ENCODE measurements at regions of chr6 and their contacts with region 1.

Region 1: GRCh38 chr6:70221025-70221714 is 81.7 kb downstream of the COL9A1 start:
- DNase-seq: peak; percentile 46 to 70 (median 60)
- ATAC-seq: peak; percentile 81
- H3K4me3 ChIP-seq: no peak overlapping the region
- H3K27ac ChIP-seq: no peak overlapping the region
- H3K4me1 ChIP-seq: no peaks in the 10 kb centered on the region; a peak in 1 of 5 replicates
- H3K27me3 ChIP-seq: peaks cover 6 to 10% of the 10 kb centered on the region in 2 experiments; a peak in 3 of 5 replicates
- CTCF ChIP-seq: peak; percentile 54 to 83 (median 66); a peak in 5 of 6 replicates
- EP300 ChIP-seq: no peak
- POLR2A ChIP-seq: no peak
- RAD21 ChIP-seq: peak; percentile 76 to 79

Region 2: DNA sequence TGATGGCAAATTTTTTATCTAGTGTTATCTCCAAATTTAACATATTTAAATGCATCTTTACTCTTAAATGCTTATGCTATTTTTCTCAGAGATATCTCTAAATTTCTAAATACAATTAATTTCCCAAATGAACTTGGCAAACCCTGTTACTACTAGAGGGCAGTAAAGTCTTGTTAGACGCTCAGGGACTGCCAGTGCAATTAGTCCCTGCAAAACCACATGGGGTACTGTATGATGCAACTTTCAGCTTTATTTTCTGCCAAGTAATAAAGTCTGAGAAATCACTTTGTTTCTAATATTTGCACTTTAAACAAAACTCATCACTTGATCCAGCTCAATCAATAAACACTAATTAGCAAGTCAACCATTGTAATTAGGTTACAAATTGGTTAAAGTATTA is 1662.1 kb before region 1 on chr6:
- CTCF ChIA-PET with region 1: no interaction called
- POLR2A ChIA-PET with region 1: no interaction called
- in situ Hi-C with region 1: no loop called
- intact Hi-C with region 1: no loop called
- DNase-seq: peak in 2 of 4 experiments; percentile 9 to 24
- ATAC-seq: peak; percentile 91
- H3K4me3 ChIP-seq: no peak overlapping the region
- H3K27ac ChIP-seq: no peak overlapping the region
- H3K4me1 ChIP-seq: no peaks in the 10 kb centered on the region
- H3K27me3 ChIP-seq: no peaks in the 10 kb centered on the region
- CTCF ChIP-seq: peak in 2 of 3 experiments; percentile 36 to 45; a peak in 3 of 6 replicates
- EP300 ChIP-seq: no peak
- POLR2A ChIP-seq: no peak
- RAD21 ChIP-seq: peak; percentile 32 to 49; a peak in 3 of 4 replicates

Region 3: DNA sequence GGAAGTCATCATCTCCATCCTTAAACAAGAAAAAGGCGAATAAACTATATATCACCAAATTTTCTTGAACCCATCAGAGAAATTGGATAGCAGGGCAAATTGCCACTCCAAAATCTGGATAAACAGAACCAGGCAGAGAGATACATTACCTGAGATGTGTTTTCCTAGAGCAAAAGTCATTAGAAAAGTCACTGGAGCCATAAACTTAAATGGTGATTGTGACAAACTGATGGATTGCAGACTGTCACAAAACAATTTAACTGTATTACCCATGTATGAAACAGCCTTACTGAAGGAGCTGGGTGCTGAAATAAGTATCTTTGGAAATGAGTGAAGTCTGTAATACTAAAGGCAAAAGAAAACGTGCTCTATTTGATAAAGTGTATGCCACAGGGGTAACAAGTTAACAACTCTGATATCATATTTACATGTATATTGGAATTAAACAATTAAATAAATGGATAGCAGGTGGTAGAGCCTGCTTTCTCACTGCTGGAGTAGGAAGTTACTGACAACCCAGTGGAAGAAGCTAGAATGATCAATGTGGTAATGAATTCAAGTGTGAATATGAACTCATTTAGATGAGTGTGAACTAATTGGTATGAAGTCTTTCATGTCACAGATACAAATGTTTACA is 611.2 kb before region 1 on chr6:
- CTCF ChIA-PET with region 1: no interaction called
- POLR2A ChIA-PET with region 1: no interaction called
- in situ Hi-C with region 1: no loop called
- intact Hi-C with region 1: no loop called
- DNase-seq: no peak
- ATAC-seq: peak; percentile 56
- H3K4me3 ChIP-seq: no peak overlapping the region
- H3K27ac ChIP-seq: no peak overlapping the region
- H3K4me1 ChIP-seq: no peaks in the 10 kb centered on the region
- H3K27me3 ChIP-seq: no peaks in the 10 kb centered on the region
- CTCF ChIP-seq: no peak
- EP300 ChIP-seq: no peak
- POLR2A ChIP-seq: peak; percentile 63; the same call in 1 of the 2 replicates
- RAD21 ChIP-seq: no peak

Region 4: DNA sequence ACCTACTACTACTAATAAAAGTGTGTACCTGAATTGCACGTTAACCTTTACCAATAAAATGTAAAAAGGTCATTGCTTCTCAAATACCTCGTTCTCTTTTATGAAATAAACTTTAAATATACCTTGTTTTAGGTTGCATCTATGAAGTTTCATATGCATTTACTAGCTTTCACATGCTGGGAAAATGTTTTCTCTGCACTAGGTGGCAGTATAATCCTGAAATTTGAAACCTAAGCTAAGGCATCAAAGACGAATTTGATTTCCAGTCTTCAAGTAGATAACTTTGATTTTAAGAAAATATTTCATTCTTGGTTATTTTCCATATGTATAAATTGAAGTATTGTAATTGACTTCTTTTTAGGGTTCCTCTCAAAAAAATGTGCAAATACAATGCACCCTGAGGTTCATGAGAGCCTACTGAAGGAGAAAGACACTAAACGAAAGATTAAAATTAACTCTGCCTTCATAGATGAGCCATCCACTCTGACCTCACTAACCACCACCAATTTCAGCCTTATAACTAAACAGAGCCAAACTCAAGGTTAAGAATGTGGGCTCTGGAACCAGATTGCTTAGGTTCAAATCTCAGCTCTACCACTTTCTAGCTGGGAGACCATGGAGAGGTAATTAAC is 89.0 kb after region 1 on chr6:
- CTCF ChIA-PET with region 1: no interaction called
- POLR2A ChIA-PET with region 1: interaction called, 3 read pairs
- in situ Hi-C with region 1: no loop called
- intact Hi-C with region 1: loop called (anchors 2 kb)
- DNase-seq: peak in 3 of 4 experiments; percentile 14 to 66 (median 20)
- ATAC-seq: peak; percentile 73
- H3K4me3 ChIP-seq: no peak overlapping the region
- H3K27ac ChIP-seq: no peak overlapping the region
- H3K4me1 ChIP-seq: no peaks in the 10 kb centered on the region; a peak in 1 of 5 replicates
- H3K27me3 ChIP-seq: peaks cover 0 to 8% of the 10 kb centered on the region in 2 experiments; a peak in 2 of 5 replicates
- CTCF ChIP-seq: peak; percentile 54 to 90 (median 70); a peak in 5 of 6 replicates
- EP300 ChIP-seq: no peak
- POLR2A ChIP-seq: no peak
- RAD21 ChIP-seq: peak; percentile 93 to 97

Region 5: GRCh38 chr6:70686548-70687133 is 465.5 kb after region 1 on chr6:
- CTCF ChIA-PET with region 1: no interaction called
- POLR2A ChIA-PET with region 1: no interaction called
- in situ Hi-C with region 1: loop called (anchors 10 kb)
- intact Hi-C with region 1: loop called (anchors 5 kb)
- DNase-seq: peak; percentile 15 to 49 (median 20)
- ATAC-seq: peak; percentile 75
- H3K4me3 ChIP-seq: no peak overlapping the region
- H3K27ac ChIP-seq: no peak overlapping the region
- H3K4me1 ChIP-seq: no peaks in the 10 kb centered on the region
- H3K27me3 ChIP-seq: no peaks in the 10 kb centered on the region
- CTCF ChIP-seq: peak; percentile 31 to 81 (median 36); a peak in 3 of 6 replicates
- EP300 ChIP-seq: no peak
- POLR2A ChIP-seq: no peak
- RAD21 ChIP-seq: peak; percentile 76 to 83

Region 6: DNA sequence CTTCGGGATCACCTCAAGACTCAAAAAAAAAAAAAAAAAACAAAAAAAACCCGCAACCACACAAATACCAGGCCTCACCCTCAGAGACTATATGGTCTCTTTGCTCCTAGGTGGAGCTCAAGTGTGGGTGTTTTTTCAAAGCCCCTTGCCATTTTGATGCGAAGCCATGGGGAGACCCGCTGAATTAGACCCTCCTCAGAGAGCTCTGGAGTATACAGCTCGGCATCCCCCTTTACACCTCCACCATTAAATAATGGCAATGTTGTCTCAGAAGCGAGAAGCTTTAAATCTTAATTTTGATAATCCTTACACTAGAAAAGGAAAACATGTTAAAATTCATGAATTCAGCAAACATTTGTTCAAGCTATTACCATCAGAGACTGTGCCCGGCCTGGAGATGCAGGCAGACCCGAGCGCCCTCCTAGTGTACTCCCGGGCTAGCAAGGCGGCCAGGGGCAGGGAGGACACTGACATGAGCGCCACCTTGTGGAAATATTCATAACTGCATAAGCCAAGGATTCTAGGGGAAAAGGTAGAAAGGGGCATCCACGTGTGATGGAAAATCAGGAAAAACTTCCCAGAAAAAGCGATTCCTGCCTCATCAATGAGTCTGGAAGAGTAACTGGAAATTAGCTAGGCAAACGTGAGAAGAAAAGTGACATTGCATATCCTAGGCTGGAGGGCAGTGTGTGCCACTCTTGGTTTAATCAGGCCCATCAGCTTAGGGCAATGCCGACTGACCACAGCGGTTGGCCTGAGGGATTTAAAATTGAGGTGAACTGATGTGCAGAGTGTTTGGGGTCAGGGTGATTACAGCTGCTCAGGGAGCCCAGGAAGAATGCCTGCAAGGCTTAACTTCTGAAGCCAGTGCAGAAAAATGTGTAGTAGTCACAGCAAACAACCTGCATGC is 663.2 kb after region 1 on chr6:
- CTCF ChIA-PET with region 1: interaction called, 3 read pairs
- POLR2A ChIA-PET with region 1: no interaction called
- in situ Hi-C with region 1: no loop called
- intact Hi-C with region 1: loop called (anchors 5 kb)
- DNase-seq: peak; percentile 72 to 84 (median 80)
- ATAC-seq: peak; percentile 97
- H3K4me3 ChIP-seq: no peak overlapping the region
- H3K27ac ChIP-seq: no peak overlapping the region
- H3K4me1 ChIP-seq: no peaks in the 10 kb centered on the region
- H3K27me3 ChIP-seq: peaks cover 4 to 22% of the 10 kb centered on the region in 2 experiments; a peak in 2 of 5 replicates
- CTCF ChIP-seq: peak; percentile 88 to 94 (median 92)
- EP300 ChIP-seq: no peak
- POLR2A ChIP-seq: no peak
- RAD21 ChIP-seq: peak; percentile 85 to 90

Region 7: DNA sequence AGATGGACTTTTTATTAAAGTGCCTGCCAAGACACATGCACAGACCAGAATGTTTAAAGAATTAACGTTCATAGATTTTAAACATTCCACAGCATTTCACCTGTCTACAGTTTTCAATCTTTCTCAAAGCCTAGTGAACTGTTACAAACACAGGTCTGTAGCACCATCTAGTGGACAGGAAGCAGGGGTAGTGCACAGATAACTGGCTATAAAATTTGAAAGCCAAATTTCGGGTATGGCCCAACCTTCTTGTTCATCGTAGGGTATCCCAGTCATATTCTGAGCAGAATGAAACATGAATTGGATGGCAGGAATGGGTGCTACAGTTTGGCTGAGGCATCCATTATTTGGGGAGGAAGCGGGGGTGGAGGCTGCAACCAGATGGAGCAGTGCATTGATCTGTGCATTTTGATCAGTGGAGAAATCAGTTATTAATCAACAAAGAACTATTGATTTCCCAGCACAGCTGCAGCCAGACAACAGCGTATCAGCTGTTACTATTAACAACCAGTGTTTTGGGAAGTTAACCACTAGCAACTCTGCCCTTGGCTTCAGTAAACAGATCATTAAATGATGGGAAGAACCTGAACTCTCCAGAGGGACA is 791.8 kb after region 1 on chr6:
- CTCF ChIA-PET with region 1: interaction called, 5 read pairs
- POLR2A ChIA-PET with region 1: no interaction called
- in situ Hi-C with region 1: no loop called
- intact Hi-C with region 1: loop called (anchors 5 kb)
- DNase-seq: peak; percentile 57 to 70 (median 64)
- ATAC-seq: peak; percentile 93
- H3K4me3 ChIP-seq: no peak overlapping the region
- H3K27ac ChIP-seq: no peak overlapping the region
- H3K4me1 ChIP-seq: no peaks in the 10 kb centered on the region
- H3K27me3 ChIP-seq: no peaks in the 10 kb centered on the region
- CTCF ChIP-seq: peak; percentile 64 to 76 (median 71)
- EP300 ChIP-seq: no peak
- POLR2A ChIP-seq: no peak
- RAD21 ChIP-seq: peak; percentile 72 to 83